ENCODE measurements at regions of chr14 and their contacts with region 1.

Region 1: GRCh38 chr14:23076785-23077408 is 18.0 kb downstream of the ACIN1 start:
- DNase-seq: peak in 4 of 14 experiments; percentile 38 to 72 (median 56)
- ATAC-seq: peak; percentile 79
- H3K4me3 ChIP-seq: no peak overlapping the region
- H3K4me3 Mint-ChIP-seq: no peak overlapping the region
- H3K27ac ChIP-seq: no peak overlapping the region
- H3K27ac Mint-ChIP-seq: peak overlapping the region; percentile 22
- H3K4me1 ChIP-seq: peaks cover 4% of the 10 kb centered on the region
- H3K4me1 Mint-ChIP-seq: peaks cover 10% of the 10 kb centered on the region
- H3K27me3 ChIP-seq: no peaks in the 10 kb centered on the region
- H3K27me3 Mint-ChIP-seq: no peaks in the 10 kb centered on the region
- CTCF ChIP-seq: peak; percentile 68

Region 2: DNA sequence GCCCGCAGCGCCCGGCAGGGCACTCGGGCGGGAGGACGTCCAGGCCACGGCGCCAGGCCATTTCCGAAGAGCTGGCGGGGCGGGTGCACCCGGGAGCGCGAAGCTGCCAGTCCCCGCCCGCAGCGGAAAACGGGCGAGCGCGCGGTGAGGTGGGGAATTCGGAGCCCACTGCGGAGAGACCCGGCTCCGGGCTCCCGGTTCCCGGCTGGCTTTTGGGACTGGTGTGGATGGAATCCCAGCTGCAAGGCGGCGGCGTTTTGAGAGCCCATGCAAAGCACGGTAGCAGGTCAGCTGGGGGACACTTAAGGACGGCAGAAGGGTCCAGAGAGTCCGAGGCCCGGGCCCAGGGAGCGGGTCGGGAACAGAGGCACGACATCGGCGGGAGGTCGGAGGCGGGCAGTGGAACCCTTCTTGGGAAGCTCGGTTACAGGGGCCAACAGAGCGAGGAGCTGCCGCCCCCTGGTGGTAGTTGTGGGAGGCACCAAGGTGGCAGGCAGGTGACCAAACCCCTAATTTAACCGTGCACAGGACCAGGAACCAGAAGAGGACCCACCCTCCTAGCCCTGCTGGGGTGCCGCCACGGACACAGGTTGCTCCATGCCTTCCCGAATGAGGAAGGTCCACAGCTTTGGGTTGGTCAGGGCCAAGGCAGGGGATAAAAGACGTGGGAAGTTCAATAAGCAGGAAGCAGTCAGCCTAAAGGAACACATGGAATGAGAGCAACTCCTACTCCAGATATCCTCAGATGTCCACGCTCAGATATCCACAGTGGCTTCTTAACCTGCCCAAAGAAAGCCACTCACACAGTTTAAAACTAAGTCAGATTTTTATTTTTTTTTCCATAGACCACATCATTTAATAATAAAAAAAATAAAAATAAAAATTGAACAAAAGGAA is 18.9 kb before region 1 on chr14:
- CTCF ChIA-PET with region 1: interaction called, 12 read pairs
- POLR2A ChIA-PET with region 1: interaction called, 3 read pairs
- intact Hi-C with region 1: no loop called
- DNase-seq: peak; percentile 74 to 94 (median 86)
- ATAC-seq: peak; percentile 73
- H3K4me3 ChIP-seq: peak overlapping the region; percentile 75
- H3K4me3 Mint-ChIP-seq: peak overlapping the region; percentile 90
- H3K27ac ChIP-seq: no peak overlapping the region
- H3K27ac Mint-ChIP-seq: peak overlapping the region; percentile 63
- H3K4me1 ChIP-seq: peaks cover 24% of the 10 kb centered on the region
- H3K4me1 Mint-ChIP-seq: peaks cover 18% of the 10 kb centered on the region
- H3K27me3 ChIP-seq: no peaks in the 10 kb centered on the region
- H3K27me3 Mint-ChIP-seq: no peaks in the 10 kb centered on the region
- CTCF ChIP-seq: peak; percentile 91

Region 3: GRCh38 chr14:23114669-23115491 is 38.0 kb after region 1 on chr14:
- CTCF ChIA-PET with region 1: interaction called, 15 read pairs
- POLR2A ChIA-PET with region 1: interaction called, 4 read pairs
- intact Hi-C with region 1: loop called in 1 of 2 experiments (anchors 5 kb)
- DNase-seq: no peak
- ATAC-seq: no peak
- H3K4me3 ChIP-seq: no peak overlapping the region
- H3K4me3 Mint-ChIP-seq: no peak overlapping the region
- H3K27ac ChIP-seq: no peak overlapping the region
- H3K27ac Mint-ChIP-seq: peak overlapping the region; percentile 94
- H3K4me1 ChIP-seq: peaks cover 37% of the 10 kb centered on the region
- H3K4me1 Mint-ChIP-seq: peaks cover 39% of the 10 kb centered on the region
- H3K27me3 ChIP-seq: peaks cover 16 to 18% of the 10 kb centered on the region in 2 experiments
- H3K27me3 Mint-ChIP-seq: no peaks in the 10 kb centered on the region
- CTCF ChIP-seq: no peak

Region 4: DNA sequence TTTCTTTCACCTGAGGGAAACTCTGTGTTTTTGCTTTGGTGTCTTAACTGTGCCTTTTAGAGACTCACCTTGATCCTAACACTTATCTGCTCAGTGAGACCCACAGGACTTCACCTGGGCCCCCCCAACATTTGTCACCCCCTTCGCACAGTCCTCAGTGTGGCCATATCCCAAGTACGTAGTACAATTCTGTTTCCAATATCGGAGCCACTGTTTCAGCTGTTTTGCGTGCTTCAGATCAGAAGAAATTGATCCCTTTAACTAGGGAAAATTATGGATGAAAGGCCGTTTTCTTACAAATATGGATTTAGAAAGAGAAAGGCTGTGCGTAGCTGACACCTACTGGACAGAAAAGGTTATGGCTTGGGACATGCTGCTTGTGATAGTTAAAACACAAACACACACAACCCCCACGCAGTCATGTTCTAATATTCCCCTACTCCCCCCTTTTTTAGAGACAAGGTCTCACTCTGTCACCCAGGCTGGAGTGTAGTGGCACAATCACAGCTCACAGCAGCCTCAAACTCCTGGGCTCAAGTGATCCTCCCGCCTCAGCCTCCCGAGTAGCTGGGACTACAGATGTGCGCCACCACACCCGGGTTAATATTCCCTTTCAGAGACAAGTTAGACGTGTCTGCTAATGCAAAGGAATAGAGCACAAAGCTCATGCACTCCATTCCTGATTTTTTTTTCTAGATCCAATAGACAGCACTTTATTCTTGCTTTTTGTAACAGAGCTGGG is 110.2 kb after region 1 on chr14:
- CTCF ChIA-PET with region 1: interaction called, 9 read pairs
- POLR2A ChIA-PET with region 1: no interaction called
- intact Hi-C with region 1: loop called (anchors 1 to 2 kb)
- DNase-seq: peak in 7 of 14 experiments; percentile 3 to 68 (median 37)
- ATAC-seq: peak; percentile 58
- H3K4me3 ChIP-seq: no peak overlapping the region
- H3K4me3 Mint-ChIP-seq: no peak overlapping the region
- H3K27ac ChIP-seq: no peak overlapping the region
- H3K27ac Mint-ChIP-seq: no peak overlapping the region
- H3K4me1 ChIP-seq: peaks cover 15% of the 10 kb centered on the region
- H3K4me1 Mint-ChIP-seq: no peaks in the 10 kb centered on the region
- H3K27me3 ChIP-seq: peaks cover 2 to 12% of the 10 kb centered on the region in 2 experiments
- H3K27me3 Mint-ChIP-seq: no peaks in the 10 kb centered on the region
- CTCF ChIP-seq: peak; percentile 71

Region 5: DNA sequence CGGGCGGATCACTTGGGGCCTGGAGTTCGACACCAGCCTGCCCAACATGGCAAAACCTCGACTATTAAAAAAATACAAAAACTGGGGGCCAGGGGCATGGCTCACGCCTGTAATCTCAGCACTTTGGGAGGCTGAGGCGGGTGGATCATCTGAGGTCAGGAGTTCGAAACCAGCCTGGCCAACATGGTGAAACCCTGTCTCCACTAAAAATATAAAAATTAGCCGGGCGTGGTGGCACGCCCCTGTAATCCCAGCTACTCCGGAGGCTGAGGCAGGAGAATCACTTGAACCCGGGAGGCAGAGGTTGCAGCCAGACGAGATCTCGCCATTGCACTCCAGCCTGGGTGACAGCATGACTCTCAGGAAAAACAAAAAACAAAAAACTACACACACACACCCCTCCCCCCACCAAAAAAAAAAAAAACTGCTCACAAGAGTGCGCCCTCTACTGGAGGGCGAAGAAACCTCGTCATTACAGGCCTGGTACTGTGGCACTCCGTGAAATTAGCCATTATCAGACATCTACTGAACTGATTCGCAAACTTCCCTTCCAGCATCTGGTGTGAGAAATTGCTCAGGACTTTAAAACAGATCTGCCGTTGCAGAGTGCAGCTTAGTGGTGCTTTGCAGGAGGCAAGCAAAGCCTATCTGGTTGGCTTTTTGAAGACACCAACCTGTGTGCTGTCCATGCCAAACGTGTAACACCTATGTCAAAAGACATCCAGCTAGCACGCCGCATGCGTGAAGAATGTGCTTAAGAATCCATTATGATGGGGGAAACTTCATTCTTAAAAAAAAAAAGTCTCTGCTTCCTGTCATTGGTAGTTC is 218.1 kb after region 1 on chr14:
- CTCF ChIA-PET with region 1: interaction called, 3 read pairs
- POLR2A ChIA-PET with region 1: interaction called, 3 read pairs
- intact Hi-C with region 1: loop called (anchors 5 kb)
- DNase-seq: peak; percentile 28 to 87 (median 48)
- ATAC-seq: peak; percentile 88
- H3K4me3 ChIP-seq: no peak overlapping the region
- H3K4me3 Mint-ChIP-seq: peak overlapping the region; percentile 27
- H3K27ac ChIP-seq: no peak overlapping the region
- H3K27ac Mint-ChIP-seq: peak overlapping the region; percentile 37
- H3K4me1 ChIP-seq: peaks cover 13% of the 10 kb centered on the region
- H3K4me1 Mint-ChIP-seq: peaks cover 28% of the 10 kb centered on the region
- H3K27me3 ChIP-seq: no peaks in the 10 kb centered on the region
- H3K27me3 Mint-ChIP-seq: no peaks in the 10 kb centered on the region
- CTCF ChIP-seq: peak; percentile 86